Activated T-helper 1 cell treated with anti-CD3 and anti-CD28 coated beads, Interleukin-12 subunit alpha, Interleukin-12 subunit beta, Interleukin-2, Interleukin-4 antibody, amounts not matched to agents 30 ng/mL and 10 ng/mL and 1 ng/mL, durations not matched to agents 14 hours and 24 hours and 36 hours (primary cell): ENCODE measurements at regions of chr20 and their contacts with region 1.

Region 1: DNA sequence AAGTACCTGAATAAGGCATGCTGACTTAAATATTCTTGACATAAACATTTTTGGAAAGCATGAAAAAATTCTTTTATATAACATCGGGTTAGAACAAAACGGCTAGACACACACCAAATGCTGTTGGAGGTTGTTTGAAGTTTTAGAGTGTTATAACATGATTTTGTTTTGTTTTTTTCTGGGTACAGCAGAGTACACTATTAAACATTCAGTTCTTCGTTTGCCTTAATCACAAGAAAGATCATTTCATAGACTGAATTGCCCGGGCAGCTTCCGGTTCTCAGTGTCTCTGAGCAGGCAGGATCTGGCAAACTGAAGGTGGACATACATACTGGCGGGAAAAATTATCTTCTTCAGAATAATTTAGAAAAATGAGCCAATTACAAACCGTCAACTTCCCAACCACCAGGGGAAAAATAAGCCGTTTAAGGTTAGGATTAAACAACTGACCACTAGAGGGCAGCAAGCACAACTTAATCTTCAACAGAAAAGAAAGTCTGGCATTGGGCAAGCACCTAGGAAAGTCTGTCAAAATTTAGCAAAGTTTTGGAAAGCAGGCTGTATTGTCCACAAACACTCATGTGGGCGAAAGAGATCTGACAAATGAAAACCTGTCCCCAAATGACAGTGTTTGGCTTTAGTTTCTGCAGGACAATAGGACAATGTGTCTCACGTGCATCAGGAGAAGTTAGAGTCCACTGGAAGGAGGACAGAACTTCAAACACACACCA is 15.0 kb downstream of the ZNF217 start:
- DNase-seq: peak; percentile 62
- H3K4me3 Mint-ChIP-seq: peak overlapping the region; percentile 83
- H3K27ac Mint-ChIP-seq: peak overlapping the region; percentile 88
- H3K4me1 Mint-ChIP-seq: peaks cover 85% of the 10 kb centered on the region
- H3K27me3 Mint-ChIP-seq: no peaks in the 10 kb centered on the region

Region 2: GRCh38 chr20:53623454-53624211 is 45.0 kb after region 1 on chr20:
- intact Hi-C with region 1: loop called (anchors 1 kb)
- DNase-seq: peak; percentile 29
- H3K4me3 Mint-ChIP-seq: peak overlapping the region; percentile 74
- H3K27ac Mint-ChIP-seq: peak overlapping the region; percentile 94
- H3K4me1 Mint-ChIP-seq: peaks cover 37% of the 10 kb centered on the region
- H3K27me3 Mint-ChIP-seq: no peaks in the 10 kb centered on the region

Region 3: DNA sequence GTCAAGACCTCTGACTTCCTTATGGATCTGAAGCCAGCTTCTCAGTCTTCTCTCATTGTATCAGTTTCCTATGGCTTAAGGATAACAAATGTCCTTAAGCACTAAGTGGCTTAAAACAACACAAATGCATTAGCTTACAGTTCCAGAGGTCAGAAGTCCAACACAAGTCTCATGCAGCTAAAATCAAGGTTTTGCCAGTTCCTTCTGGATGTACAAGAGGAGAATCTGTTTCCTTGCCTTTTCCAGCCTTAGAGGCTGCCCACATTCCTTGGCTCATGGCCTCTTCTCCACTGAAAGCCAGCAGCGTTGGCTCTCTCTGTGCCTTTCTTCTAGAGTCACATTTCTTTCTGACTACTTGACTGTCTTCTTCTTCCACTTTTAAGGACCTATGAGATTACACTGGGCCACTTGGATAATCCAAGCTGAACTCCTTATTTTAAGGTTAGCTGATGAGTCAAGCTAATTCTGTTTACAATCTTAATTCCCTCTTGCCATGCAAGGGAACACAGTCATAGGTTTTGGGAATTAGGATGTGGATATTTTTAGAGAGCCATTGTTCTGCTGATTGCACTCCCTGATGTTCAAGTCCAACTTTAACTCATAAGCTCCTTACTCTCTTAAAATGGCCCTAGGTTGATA is 312.8 kb after region 1 on chr20:
- intact Hi-C with region 1: loop called (anchors 1 kb)
- DNase-seq: no peak
- H3K4me3 Mint-ChIP-seq: no peak overlapping the region
- H3K27ac Mint-ChIP-seq: no peak overlapping the region
- H3K4me1 Mint-ChIP-seq: peaks cover 40% of the 10 kb centered on the region
- H3K27me3 Mint-ChIP-seq: no peaks in the 10 kb centered on the region

Region 4: GRCh38 chr20:53939572-53940359 is 361.1 kb after region 1 on chr20:
- intact Hi-C with region 1: loop called (anchors 1 kb)
- DNase-seq: peak; percentile 54
- H3K4me3 Mint-ChIP-seq: no peak overlapping the region
- H3K27ac Mint-ChIP-seq: no peak overlapping the region
- H3K4me1 Mint-ChIP-seq: peaks cover 69% of the 10 kb centered on the region
- H3K27me3 Mint-ChIP-seq: no peaks in the 10 kb centered on the region

Region 5: GRCh38 chr20:54199721-54200176 is 621.1 kb after region 1 on chr20:
- intact Hi-C with region 1: loop called (anchors 5 kb)
- DNase-seq: peak; percentile 44
- H3K4me3 Mint-ChIP-seq: no peak overlapping the region
- H3K27ac Mint-ChIP-seq: no peak overlapping the region
- H3K4me1 Mint-ChIP-seq: no peaks in the 10 kb centered on the region
- H3K27me3 Mint-ChIP-seq: peaks cover 5% of the 10 kb centered on the region